Activated T-helper 1 cell treated with anti-CD3 and anti-CD28 coated beads, Interleukin-12 subunit alpha, Interleukin-12 subunit beta, Interleukin-2, Interleukin-4 antibody, amounts not matched to agents 30 ng/mL and 10 ng/mL and 1 ng/mL, durations not matched to agents 14 hours and 24 hours and 36 hours (primary cell): ENCODE measurements at regions of chr14 and their contacts with region 1.

Region 1: DNA sequence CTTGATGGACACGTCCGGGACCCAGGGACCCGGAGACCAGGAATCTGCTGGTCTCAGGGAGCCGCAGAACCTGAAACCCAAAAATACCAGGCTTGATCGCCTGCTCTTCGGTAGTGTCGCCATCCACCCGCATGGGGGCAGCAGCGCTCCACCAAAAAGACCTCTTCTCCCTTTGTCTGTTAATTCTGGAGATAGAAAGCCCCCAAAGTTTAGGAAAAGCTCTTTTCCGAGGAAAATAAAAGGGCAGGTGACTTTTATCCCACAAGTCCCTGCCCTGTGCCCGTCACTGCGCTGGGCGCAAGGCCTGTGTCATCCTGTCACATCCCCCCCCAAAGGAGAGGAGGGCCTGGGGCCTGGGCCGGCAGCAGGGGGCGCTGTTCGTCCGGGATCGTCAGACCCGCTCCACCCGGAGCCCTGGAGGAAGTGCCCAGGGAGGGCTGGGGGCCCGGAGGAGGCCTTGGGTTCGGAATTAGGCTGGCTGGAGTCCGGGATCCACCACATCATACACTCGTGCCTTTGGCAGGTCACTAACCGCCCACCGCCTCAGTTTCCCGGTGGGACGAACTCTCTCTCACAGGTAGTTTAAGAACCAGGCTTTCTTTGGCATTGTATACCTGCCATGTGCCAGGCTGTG is 31.9 kb downstream of the DAD1 start:
- DNase-seq: peak; percentile 88
- H3K4me3 Mint-ChIP-seq: peak overlapping the region; percentile 83
- H3K27ac Mint-ChIP-seq: peak overlapping the region; percentile 96
- H3K4me1 Mint-ChIP-seq: peaks cover 93% of the 10 kb centered on the region
- H3K27me3 Mint-ChIP-seq: peaks cover 2% of the 10 kb centered on the region

Region 2: DNA sequence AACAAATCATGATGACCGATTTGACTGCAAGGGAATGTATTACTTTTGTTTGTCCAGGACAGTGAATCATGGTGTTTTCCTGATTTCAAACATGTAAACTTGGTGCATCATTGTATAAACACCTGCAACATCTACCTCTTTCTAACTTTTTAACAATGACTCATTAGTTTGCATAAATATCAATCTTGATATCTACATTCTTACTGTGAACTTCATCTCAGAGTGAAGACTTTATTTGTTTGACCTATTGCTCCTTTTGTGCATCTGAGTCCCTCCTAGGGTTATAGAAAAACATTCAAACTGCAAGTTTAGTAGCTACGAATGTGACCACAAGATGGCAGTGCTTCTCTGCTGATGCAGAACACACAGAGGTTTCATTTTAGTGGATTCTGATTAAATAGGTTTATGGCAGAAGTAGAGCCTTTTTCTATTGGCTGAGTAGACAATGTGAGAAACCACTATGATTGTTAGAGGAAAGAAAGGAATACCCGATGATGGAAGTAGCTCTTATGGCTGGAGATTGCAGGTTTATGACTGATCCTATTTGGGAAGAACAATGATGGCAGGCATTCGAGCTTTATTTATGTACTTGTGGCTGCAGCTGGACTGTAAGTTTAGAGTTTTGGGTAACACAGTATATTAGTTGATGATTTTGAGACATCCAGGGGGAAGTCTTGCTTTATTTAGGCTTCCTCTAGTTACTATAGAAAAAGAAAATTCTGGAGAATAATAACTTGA is 639.2 kb before region 1 on chr14:
- intact Hi-C with region 1: loop called (anchors 1 kb)
- DNase-seq: peak; percentile 48
- H3K4me3 Mint-ChIP-seq: peak overlapping the region; percentile 75
- H3K27ac Mint-ChIP-seq: peak overlapping the region; percentile 49
- H3K4me1 Mint-ChIP-seq: peaks cover 62% of the 10 kb centered on the region
- H3K27me3 Mint-ChIP-seq: no peaks in the 10 kb centered on the region

Region 3: GRCh38 chr14:22200977-22201605 is 356.0 kb before region 1 on chr14:
- intact Hi-C with region 1: loop called (anchors 5 kb)
- DNase-seq: no peak
- H3K4me3 Mint-ChIP-seq: no peak overlapping the region
- H3K27ac Mint-ChIP-seq: peak overlapping the region; percentile 44
- H3K4me1 Mint-ChIP-seq: peaks cover 6% of the 10 kb centered on the region
- H3K27me3 Mint-ChIP-seq: no peaks in the 10 kb centered on the region

Region 4: GRCh38 chr14:22386924-22387775 is 170.0 kb before region 1 on chr14:
- intact Hi-C with region 1: loop called (anchors 10 kb)
- DNase-seq: no peak
- H3K4me3 Mint-ChIP-seq: no peak overlapping the region
- H3K27ac Mint-ChIP-seq: no peak overlapping the region
- H3K4me1 Mint-ChIP-seq: no peaks in the 10 kb centered on the region
- H3K27me3 Mint-ChIP-seq: no peaks in the 10 kb centered on the region

Region 5: GRCh38 chr14:22432348-22432976 is 124.6 kb before region 1 on chr14:
- intact Hi-C with region 1: no loop called
- DNase-seq: no peak
- H3K4me3 Mint-ChIP-seq: no peak overlapping the region
- H3K27ac Mint-ChIP-seq: no peak overlapping the region
- H3K4me1 Mint-ChIP-seq: no peaks in the 10 kb centered on the region
- H3K27me3 Mint-ChIP-seq: no peaks in the 10 kb centered on the region

Region 6: GRCh38 chr14:22464422-22465142 is 92.5 kb before region 1 on chr14:
- intact Hi-C with region 1: no loop called
- DNase-seq: no peak
- H3K4me3 Mint-ChIP-seq: no peak overlapping the region
- H3K27ac Mint-ChIP-seq: no peak overlapping the region
- H3K4me1 Mint-ChIP-seq: no peaks in the 10 kb centered on the region
- H3K27me3 Mint-ChIP-seq: no peaks in the 10 kb centered on the region

Region 7: GRCh38 chr14:22589096-22589839 is 32.2 kb after region 1 on chr14 and contains the start of gene DAD1:
- intact Hi-C with region 1: loop called (anchors 1 kb)
- DNase-seq: peak; percentile 100
- H3K4me3 Mint-ChIP-seq: peak within 1 kb of the TSS; percentile 91
- H3K27ac Mint-ChIP-seq: peak within 1 kb of the TSS; percentile 96
- H3K4me1 Mint-ChIP-seq: peaks cover 55% of the 10 kb centered on the region
- H3K27me3 Mint-ChIP-seq: no peaks in the 10 kb centered on the region
- total RNA-seq, gene DAD1: 228 and 229 TPM in 2 replicates

Region 8: GRCh38 chr14:22852940-22853767 is 296.0 kb after region 1 on chr14:
- intact Hi-C with region 1: loop called (anchors 1 kb)
- DNase-seq: peak; percentile 80
- H3K4me3 Mint-ChIP-seq: peak overlapping the region; percentile 81
- H3K27ac Mint-ChIP-seq: peak overlapping the region; percentile 82
- H3K4me1 Mint-ChIP-seq: peaks cover 42% of the 10 kb centered on the region
- H3K27me3 Mint-ChIP-seq: peaks cover 13% of the 10 kb centered on the region

Region 9: DNA sequence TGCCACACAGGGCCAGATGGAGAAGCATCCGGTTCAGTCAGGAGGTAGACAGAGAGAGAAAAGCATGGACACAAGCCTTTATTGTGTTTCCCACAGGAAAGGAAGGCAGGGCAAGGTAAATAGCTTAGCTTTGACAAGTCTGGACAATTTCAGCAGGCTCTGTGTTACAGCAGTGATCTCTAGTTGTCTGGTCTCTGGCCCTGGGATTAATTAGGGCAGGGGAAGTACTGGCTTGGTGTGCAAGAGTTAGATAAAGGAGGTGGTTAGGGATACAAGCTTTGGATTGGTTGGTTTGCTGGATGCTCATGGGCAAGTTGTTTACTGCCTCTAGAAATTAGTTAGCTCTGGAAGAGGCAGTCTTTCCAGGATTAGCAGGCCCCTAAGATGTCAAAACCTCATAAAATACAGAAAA is 897.3 kb after region 1 on chr14:
- intact Hi-C with region 1: no loop called
- DNase-seq: no peak
- H3K4me3 Mint-ChIP-seq: no peak overlapping the region
- H3K27ac Mint-ChIP-seq: no peak overlapping the region
- H3K4me1 Mint-ChIP-seq: no peaks in the 10 kb centered on the region
- H3K27me3 Mint-ChIP-seq: peaks cover 30% of the 10 kb centered on the region